Endothelial cell of umbilical vein (primary cell): ENCODE measurements at regions of chr10 and their contacts with region 1.

Region 1: DNA sequence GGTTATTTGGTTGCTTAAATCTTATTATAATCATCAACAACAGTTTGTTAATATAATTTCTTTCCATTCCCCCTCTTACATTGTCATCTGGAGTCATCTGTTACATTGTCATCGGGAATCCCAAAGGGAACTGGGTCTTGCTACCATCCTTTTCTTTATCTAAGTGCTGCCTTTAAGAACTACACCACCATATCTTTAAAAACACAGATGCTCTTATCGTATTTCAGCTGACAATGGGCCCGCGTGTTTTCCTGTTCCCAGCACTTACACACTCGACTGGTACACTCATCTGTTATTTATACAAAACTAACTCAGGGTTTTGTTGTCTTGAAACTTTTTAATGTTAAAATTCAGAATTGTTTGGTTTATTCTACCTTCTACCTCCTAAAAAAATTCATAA is 256.2 kb upstream of the MGMT start:
- DNase-seq: peak; percentile 9
- H3K4me3 ChIP-seq: no peak overlapping the region
- H3K27ac ChIP-seq: no peak overlapping the region
- H3K4me1 ChIP-seq: no peaks in the 10 kb centered on the region
- H3K27me3 ChIP-seq: no peaks in the 10 kb centered on the region
- CTCF ChIP-seq: no peak
- POLR2A ChIP-seq: no peak

Region 2: GRCh38 chr10:129171812-129172211 is 39.1 kb before region 1 on chr10:
- CTCF ChIA-PET with region 1: no interaction called
- POLR2A ChIA-PET with region 1: no interaction called
- dilution Hi-C with region 1: no loop called
- intact Hi-C with region 1: loop called (anchors 2 kb)
- DNase-seq: no peak
- H3K4me3 ChIP-seq: no peak overlapping the region
- H3K27ac ChIP-seq: no peak overlapping the region
- H3K4me1 ChIP-seq: no peaks in the 10 kb centered on the region
- H3K27me3 ChIP-seq: no peaks in the 10 kb centered on the region
- CTCF ChIP-seq: no peak
- POLR2A ChIP-seq: no peak

Region 3: DNA sequence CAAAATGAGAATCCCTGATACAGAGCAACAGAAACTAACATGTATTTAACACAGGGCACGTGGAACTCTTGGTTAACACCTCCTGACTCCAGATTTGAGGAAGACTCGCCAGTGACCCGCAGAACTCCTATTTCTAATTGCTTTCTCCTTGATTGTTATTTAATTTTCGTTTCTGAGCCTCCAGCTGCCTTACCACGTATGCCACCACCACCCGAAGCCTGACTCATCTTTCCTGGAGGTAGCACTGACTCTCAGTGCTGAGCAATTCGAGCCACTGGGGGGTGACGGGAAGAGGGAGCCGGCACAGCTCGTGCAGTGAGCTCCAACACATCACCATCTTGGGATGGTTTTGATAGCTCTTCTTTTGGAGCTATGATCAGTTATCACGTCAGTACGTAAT is 17.7 kb before region 1 on chr10:
- CTCF ChIA-PET with region 1: no interaction called
- POLR2A ChIA-PET with region 1: no interaction called
- dilution Hi-C with region 1: no loop called
- intact Hi-C with region 1: no loop called
- DNase-seq: no peak
- H3K4me3 ChIP-seq: no peak overlapping the region
- H3K27ac ChIP-seq: no peak overlapping the region
- H3K4me1 ChIP-seq: no peaks in the 10 kb centered on the region
- H3K27me3 ChIP-seq: no peaks in the 10 kb centered on the region
- CTCF ChIP-seq: no peak
- POLR2A ChIP-seq: no peak